ENCODE measurements at regions of chr5 and their contacts with region 1.

Region 1: DNA sequence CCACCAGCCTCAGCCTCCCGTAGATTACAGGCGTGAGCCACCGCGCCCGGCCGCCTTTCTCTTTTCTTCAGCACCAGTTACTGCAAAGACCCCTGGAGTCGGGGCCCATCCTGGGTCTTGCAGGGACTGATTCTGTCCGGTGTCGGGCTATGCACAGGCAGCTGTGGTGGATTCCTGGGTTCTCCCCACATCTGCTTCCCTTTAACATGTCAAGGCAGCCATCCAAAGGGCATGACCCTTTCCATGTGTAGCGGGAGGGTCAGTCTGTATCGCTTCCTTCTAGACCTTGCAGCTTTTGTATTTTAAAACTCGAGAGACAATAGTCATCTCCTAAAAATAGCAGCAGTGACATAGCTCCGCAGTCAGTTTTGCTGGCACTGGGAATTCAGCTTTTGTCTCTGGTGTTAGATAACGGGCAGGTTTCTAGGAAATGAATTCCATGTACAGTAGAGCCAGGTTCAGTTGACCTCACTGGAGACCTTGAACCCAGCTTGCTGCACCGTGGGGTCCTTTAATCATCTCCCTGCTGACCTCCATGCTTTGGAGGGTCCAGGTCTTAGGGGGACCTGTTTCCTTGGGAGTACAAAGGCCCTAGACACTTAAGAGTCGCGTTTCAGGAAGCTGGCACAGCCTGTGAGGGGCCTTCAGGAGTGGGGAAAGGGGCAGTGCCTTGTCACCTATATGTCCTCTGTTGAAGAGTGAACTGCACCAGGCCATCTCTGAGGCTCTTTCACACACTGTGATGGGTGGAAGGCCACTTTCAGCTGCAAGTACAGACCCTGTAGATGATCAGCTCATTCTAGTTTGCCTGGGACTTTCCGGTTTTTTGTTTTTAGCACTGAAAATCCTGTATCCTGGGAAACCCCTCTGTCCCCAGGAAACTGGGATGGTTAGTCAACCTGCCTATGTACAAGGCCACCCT is 13.8 kb downstream of the ANKRD33B start:
- DNase-seq: no peak
- H3K4me3 Mint-ChIP-seq: no peak overlapping the region
- H3K27ac Mint-ChIP-seq: no peak overlapping the region
- H3K4me1 Mint-ChIP-seq: peaks cover 48% of the 10 kb centered on the region
- H3K27me3 Mint-ChIP-seq: peaks cover 4% of the 10 kb centered on the region

Region 2: GRCh38 chr5:9059920-9060691 is 1517.5 kb before region 1 on chr5:
- CTCF ChIA-PET with region 1: no interaction called
- intact Hi-C with region 1: no loop called
- DNase-seq: no peak
- H3K4me3 Mint-ChIP-seq: no peak overlapping the region
- H3K27ac Mint-ChIP-seq: no peak overlapping the region
- H3K4me1 Mint-ChIP-seq: no peaks in the 10 kb centered on the region
- H3K27me3 Mint-ChIP-seq: no peaks in the 10 kb centered on the region

Region 3: GRCh38 chr5:10249948-10250803 is 327.5 kb before region 1 on chr5 and contains the start of gene CCT5:
- CTCF ChIA-PET with region 1: no interaction called
- intact Hi-C with region 1: loop called (anchors 1 kb)
- DNase-seq: peak; percentile 93
- H3K4me3 Mint-ChIP-seq: peak within 1 kb of the TSS; percentile 86
- H3K27ac Mint-ChIP-seq: peak within 1 kb of the TSS; percentile 99
- H3K4me1 Mint-ChIP-seq: peaks cover 47% of the 10 kb centered on the region
- H3K27me3 Mint-ChIP-seq: no peaks in the 10 kb centered on the region
- total RNA-seq, gene CCT5: 414 to 419 TPM

Region 4: DNA sequence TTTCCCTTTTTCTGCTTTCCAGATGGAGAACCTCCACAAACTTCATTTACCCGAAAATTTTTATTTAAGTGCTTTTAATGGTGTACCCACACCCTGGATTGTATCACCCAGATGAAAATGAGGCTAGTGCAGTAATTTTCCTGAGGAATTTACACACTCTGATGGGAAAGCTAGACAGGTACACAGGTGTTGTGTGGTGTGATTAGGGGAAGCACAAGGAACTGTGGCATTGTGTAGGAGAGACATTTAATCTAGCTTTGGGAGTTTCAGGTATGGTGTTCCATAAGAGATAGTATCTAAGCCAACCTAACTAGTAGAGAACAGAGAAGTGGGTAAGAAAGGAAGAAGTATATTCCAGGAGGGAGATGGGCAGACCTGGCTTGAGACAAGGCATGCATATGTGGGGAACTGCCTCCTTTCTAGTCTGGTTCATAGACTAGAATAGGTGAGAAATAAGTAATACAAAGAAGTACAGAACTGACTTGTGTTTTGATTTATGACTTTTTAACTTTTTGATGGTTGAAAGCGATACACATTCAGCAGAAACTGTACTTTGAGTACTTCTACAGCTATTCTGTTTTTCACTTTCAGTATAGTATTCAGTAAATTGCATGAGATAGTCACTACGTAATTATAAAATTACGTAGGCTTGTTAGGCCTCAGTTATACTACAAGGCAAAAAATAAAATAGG is 158.8 kb before region 1 on chr5:
- CTCF ChIA-PET with region 1: no interaction called
- intact Hi-C with region 1: loop called (anchors 1 kb)
- DNase-seq: peak; percentile 21
- H3K4me3 Mint-ChIP-seq: no peak overlapping the region
- H3K27ac Mint-ChIP-seq: no peak overlapping the region
- H3K4me1 Mint-ChIP-seq: peaks cover 52% of the 10 kb centered on the region
- H3K27me3 Mint-ChIP-seq: no peaks in the 10 kb centered on the region

Region 5: GRCh38 chr5:10563945-10564837 is 13.4 kb before region 1 on chr5 and contains the start of gene ANKRD33B:
- CTCF ChIA-PET with region 1: interaction called, 3 read pairs
- intact Hi-C with region 1: loop called (anchors 1 kb)
- DNase-seq: peak; percentile 85
- H3K4me3 Mint-ChIP-seq: peak within 1 kb of the TSS; percentile 84
- H3K27ac Mint-ChIP-seq: peak within 1 kb of the TSS; percentile 78
- H3K4me1 Mint-ChIP-seq: peaks cover 15% of the 10 kb centered on the region
- H3K27me3 Mint-ChIP-seq: peaks cover 20% of the 10 kb centered on the region
- total RNA-seq, gene ANKRD33B: 1.9 to 2.5 TPM

Region 6: GRCh38 chr5:10635257-10635866 is 57.7 kb after region 1 on chr5:
- CTCF ChIA-PET with region 1: no interaction called
- intact Hi-C with region 1: loop called (anchors 1 kb)
- DNase-seq: peak; percentile 93
- H3K4me3 Mint-ChIP-seq: peak overlapping the region; percentile 13
- H3K27ac Mint-ChIP-seq: peak overlapping the region; percentile 79
- H3K4me1 Mint-ChIP-seq: peaks cover 56% of the 10 kb centered on the region
- H3K27me3 Mint-ChIP-seq: no peaks in the 10 kb centered on the region

Region 7: DNA sequence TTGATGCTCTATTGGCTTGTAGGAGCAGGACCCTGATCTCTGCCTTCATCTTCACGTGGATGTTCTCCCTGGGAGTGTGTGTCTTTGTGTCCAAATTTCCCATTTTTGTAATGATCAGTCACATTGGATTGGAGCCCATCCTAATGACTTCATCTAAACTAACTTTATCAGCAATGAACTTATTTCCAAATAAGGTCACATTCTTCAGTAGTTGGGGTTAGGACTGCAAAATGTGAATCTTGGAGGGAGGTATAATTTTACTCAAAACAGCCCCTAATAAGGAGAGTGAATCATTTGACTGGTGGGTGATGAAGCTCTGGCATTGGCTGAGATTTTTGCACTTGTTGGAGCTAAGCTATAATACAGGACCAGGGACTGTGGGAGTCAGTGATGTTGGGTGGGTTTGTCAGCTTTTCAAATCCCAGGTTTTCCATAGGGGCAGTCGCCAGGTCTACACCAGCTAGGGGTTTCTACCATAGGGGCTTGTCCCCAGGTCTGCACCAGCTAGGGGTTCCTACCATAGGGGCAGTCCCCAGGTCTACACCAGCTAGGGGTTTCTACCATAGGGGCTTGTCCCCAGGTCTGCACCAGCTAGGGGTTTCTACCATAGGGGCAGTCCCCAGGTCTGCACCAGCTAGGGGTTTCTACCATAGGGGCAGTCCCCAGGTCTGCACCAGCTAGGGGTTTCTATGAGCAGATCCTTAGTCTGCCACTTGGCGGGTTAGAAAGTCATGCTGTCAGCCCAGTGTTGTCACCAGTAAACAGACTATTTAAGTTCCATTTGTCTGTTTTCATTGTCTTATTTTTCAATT is 566.0 kb after region 1 on chr5:
- CTCF ChIA-PET with region 1: no interaction called
- intact Hi-C with region 1: loop called (anchors 5 kb)
- DNase-seq: peak; percentile 91
- H3K4me3 Mint-ChIP-seq: no peak overlapping the region
- H3K27ac Mint-ChIP-seq: no peak overlapping the region
- H3K4me1 Mint-ChIP-seq: peaks cover 9% of the 10 kb centered on the region
- H3K27me3 Mint-ChIP-seq: peaks cover 21% of the 10 kb centered on the region

Measured in activated naive CD4-positive, alpha-beta T cell treated with anti-CD3 and anti-CD28 coated beads for 36 hours (primary cell).